ENCODE measurements at regions of chr1 and their contacts with region 1.

Region 1: DNA sequence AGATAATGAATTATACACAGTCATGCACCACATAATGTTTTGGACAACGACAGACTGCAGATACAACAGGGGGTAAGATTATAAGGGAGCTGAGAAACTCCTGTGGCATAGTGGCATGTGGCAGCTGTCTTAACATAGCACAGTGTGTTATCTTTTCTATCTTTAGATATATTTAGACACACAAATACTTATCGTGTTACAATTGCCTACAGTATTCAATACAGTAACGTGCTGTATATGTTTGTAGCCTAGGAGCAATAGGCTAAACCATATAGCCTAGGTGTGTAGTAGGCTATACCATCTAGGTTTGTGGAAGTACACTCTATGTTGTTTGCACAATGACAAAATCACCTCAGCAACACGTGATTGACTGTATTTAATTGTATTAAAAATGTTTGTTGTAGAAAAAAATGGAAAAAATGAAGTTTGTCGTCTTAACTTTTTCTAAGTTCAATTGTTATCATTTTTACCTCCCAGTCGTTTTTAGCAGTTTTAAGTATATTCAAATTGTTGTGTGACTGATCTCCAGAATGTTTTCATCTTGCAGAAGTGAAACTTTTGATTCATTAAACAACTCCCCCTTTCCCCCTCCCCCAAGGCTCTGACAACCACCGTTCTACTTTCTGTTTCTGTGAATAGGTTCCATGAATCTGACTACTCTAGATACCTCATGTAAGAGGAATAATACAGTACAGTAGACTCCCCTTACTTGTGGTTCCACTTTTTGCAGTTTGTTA is 351.0 kb upstream of the B3GALT2 start:
- DNase-seq: peak; percentile 61
- H3K4me3 Mint-ChIP-seq: peak overlapping the region; percentile 22
- H3K27ac Mint-ChIP-seq: peak overlapping the region; percentile 78
- H3K4me1 Mint-ChIP-seq: peaks cover 55% of the 10 kb centered on the region
- H3K27me3 Mint-ChIP-seq: no peaks in the 10 kb centered on the region

Region 2: GRCh38 chr1:192545896-192546521 is 991.4 kb before region 1 on chr1:
- intact Hi-C with region 1: loop called (anchors 10 kb)
- DNase-seq: no peak
- H3K4me3 Mint-ChIP-seq: no peak overlapping the region
- H3K27ac Mint-ChIP-seq: peak overlapping the region; percentile 74
- H3K4me1 Mint-ChIP-seq: peaks cover 79% of the 10 kb centered on the region
- H3K27me3 Mint-ChIP-seq: no peaks in the 10 kb centered on the region

Region 3: GRCh38 chr1:193406901-193407300 is 130.5 kb before region 1 on chr1:
- intact Hi-C with region 1: loop called (anchors 1 kb)
- DNase-seq: no peak
- H3K4me3 Mint-ChIP-seq: no peak overlapping the region
- H3K27ac Mint-ChIP-seq: no peak overlapping the region
- H3K4me1 Mint-ChIP-seq: peaks cover 28% of the 10 kb centered on the region
- H3K27me3 Mint-ChIP-seq: no peaks in the 10 kb centered on the region

Region 4: DNA sequence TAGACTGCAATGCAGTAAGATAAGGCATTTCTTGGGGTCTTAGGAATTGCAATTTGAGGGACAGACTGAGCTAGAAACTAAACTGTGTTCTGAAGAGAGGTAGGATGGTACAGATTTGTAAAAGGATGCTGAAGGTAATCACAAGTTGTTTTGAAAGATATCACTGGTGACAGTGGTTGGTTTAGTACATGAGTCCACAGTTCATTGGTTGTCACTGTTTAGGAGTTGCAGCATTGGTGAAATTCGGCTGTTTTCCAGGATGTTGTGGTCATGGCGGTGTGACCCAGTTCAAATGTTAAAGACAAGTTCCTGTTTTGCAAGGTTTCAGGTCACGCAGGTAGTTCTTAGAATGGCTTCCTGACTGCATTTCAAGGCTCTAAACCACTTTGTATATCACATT is 58.2 kb before region 1 on chr1:
- intact Hi-C with region 1: loop called (anchors 1 kb)
- DNase-seq: peak; percentile 84
- H3K4me3 Mint-ChIP-seq: peak overlapping the region; percentile 30
- H3K27ac Mint-ChIP-seq: peak overlapping the region; percentile 86
- H3K4me1 Mint-ChIP-seq: peaks cover 78% of the 10 kb centered on the region
- H3K27me3 Mint-ChIP-seq: no peaks in the 10 kb centered on the region

Region 5: DNA sequence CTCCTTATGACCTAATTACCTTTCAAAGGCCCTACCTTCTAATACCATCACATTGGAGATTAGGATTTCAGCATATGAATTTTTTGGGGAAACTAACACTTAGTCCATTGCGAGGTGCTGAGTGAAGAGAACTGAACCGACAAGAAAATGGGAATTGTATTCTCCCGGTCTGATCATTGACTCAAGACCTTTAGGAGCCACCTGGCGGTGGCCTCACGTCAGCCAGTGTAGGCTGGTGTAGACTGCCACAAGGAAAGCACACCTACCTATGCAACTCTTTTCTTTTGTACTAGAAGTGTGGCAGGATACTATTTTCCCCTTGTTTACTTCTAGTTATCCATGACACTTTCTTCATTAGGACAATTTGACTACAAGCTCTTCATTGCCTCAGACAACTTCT is 17.5 kb before region 1 on chr1:
- intact Hi-C with region 1: no loop called
- DNase-seq: no peak
- H3K4me3 Mint-ChIP-seq: no peak overlapping the region
- H3K27ac Mint-ChIP-seq: no peak overlapping the region
- H3K4me1 Mint-ChIP-seq: no peaks in the 10 kb centered on the region
- H3K27me3 Mint-ChIP-seq: peaks cover 3% of the 10 kb centered on the region

Region 6: GRCh38 chr1:193592317-193592716 is 54.9 kb after region 1 on chr1:
- intact Hi-C with region 1: loop called (anchors 1 kb)
- DNase-seq: no peak
- H3K4me3 Mint-ChIP-seq: peak overlapping the region; percentile 34
- H3K27ac Mint-ChIP-seq: peak overlapping the region; percentile 49
- H3K4me1 Mint-ChIP-seq: peaks cover 33% of the 10 kb centered on the region
- H3K27me3 Mint-ChIP-seq: no peaks in the 10 kb centered on the region

Region 7: DNA sequence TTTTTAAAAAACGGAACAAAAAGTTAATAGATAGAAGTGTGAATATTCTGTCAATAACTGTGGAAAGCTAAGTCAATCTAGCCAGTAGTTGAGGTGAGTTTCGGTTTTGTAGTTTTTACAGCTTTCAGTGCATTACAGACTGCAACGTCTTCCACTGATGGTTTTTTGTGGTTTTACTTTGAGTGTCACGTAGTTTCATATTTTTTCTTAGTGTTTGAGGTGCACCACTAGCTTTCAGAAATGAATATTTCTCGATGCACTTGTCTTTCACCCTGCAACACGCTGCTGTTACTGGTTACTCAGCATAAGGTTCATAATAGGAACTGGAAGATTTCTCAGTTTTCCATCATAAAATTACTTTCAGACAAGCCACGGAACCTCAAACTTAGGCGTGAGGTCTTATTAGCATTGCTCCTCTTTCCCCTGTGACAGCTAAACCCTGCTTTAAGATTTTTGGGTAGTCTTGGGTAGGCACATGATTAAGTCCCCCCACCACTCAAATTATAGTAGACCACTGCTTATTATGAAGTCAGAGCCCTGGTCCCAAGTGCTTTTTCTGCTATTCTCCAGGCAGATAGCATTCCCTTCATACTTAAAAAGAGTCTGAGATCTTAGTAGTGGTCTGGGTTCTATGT is 1658.1 kb after region 1 on chr1:
- intact Hi-C with region 1: loop called (anchors 10 kb)
- DNase-seq: peak; percentile 9
- H3K4me3 Mint-ChIP-seq: no peak overlapping the region
- H3K27ac Mint-ChIP-seq: peak overlapping the region; percentile 18
- H3K4me1 Mint-ChIP-seq: peaks cover 15% of the 10 kb centered on the region
- H3K27me3 Mint-ChIP-seq: peaks cover 3% of the 10 kb centered on the region

Measured in activated T-helper 1 cell treated with anti-CD3 and anti-CD28 coated beads, Interleukin-12 subunit alpha, Interleukin-12 subunit beta, Interleukin-2, Interleukin-4 antibody, amounts not matched to agents 30 ng/mL and 10 ng/mL and 1 ng/mL, durations not matched to agents 14 hours and 24 hours and 36 hours (primary cell).